ENCODE measurements at regions of chr6 and their contacts with region 1.

Region 1: DNA sequence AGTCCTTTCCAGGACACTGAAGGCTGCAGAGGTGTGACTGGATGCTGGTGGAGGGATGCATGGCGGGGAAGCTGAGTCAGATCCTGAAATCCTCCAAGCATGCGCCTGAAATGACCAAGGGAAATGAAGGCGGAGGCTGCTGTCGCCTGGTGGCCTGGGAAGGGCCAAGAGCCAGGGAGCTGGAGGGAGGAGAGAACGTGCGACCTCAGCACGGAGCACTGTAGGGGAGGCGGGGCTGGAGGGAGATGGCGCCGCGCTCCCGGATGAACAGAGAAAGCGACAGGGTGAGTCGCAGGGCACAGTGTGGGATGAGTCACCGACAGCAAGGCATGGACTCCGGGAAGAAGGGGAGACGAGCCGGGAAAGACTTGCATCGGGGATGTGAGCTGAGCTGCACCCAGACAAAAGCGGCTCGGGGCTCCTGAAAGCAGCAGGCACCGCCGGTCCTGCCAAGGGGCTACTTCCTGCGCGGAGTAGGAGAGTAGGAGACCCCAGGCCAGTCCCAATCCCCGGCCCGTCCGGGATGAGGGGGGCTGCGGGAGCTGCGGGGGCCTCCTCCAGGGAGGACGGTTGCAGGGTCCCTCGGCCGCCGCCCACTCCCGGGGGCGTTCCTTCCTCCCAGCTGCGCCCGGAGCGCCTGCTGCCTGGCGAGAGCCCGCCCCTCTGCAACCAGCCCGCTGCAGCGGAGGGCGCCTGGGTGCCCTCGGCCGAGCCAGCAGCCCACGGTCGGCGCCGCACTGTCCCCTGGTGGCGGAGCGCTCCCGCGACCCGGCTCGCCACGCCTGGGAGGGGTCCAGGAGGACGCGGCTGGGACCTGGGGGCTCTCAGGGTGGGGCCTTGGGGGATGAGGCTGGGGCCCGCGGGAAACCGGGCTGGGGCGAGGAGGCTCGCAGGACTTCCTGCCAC is 11.0 kb upstream of the NQO2 start:
- DNase-seq: peak; percentile 62
- H3K4me3 ChIP-seq: peak overlapping the region; percentile 71
- CTCF ChIP-seq: peak; percentile 84

Region 2: GRCh38 chr6:2738373-2738979 is 250.2 kb before region 1 on chr6:
- CTCF ChIA-PET with region 1: interaction called, 14 read pairs
- POLR2A ChIA-PET with region 1: no interaction called
- DNase-seq: no peak
- H3K4me3 ChIP-seq: no peak overlapping the region
- CTCF ChIP-seq: peak; percentile 62

Region 3: GRCh38 chr6:2841264-2842138 is 147.2 kb before region 1 on chr6 and contains the start of gene SERPINB1:
- CTCF ChIA-PET with region 1: interaction called, 100 read pairs
- POLR2A ChIA-PET with region 1: interaction called, 14 read pairs
- DNase-seq: peak; percentile 72
- H3K4me3 ChIP-seq: peak within 1 kb of the TSS; percentile 55
- CTCF ChIP-seq: no peak

Region 4: DNA sequence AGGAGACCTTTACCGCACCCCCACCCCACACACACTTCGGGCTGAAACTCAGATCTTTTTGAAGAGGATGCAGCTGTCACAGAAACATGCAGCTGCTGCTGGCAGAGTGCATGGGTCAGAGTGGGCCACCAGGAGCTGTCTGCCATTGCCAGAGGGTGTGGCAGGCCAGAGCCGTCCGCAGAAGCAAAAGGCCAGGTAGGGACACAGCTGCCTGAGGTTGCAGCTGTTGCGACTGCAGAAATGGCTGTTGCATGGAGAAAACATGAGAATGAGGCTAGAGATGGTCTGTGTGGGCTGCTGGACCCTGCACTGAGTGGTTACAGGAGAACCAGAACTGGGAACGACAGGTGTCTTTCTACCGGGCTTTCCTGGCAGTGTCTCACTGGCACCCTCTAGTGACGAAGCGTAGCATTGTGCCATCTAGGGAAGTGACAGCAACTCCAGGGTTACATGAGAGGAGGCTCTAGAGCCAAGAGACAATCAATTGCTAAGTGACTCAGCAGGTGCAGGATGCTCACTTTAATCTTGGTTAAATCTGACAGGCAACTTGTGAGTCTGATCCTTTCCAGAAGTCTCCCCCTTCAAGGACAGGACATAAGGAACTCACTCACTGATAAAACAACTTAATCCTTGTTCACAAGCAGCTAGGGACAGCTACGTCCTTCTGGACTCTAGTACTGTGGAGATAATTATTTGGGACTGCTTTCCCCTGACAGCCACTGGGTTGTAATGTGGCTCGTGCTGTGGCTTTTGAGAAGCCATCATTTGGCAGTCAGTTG is 56.5 kb before region 1 on chr6:
- CTCF ChIA-PET with region 1: interaction called, 25 read pairs
- POLR2A ChIA-PET with region 1: no interaction called
- DNase-seq: peak; percentile 1
- H3K4me3 ChIP-seq: no peak overlapping the region
- CTCF ChIP-seq: peak; percentile 95

Region 5: GRCh38 chr6:2971420-2972218 is 17.1 kb before region 1 on chr6 and contains the start of gene SERPINB6:
- CTCF ChIA-PET with region 1: interaction called, 54 read pairs
- POLR2A ChIA-PET with region 1: interaction called, 14 read pairs
- DNase-seq: no peak
- H3K4me3 ChIP-seq: peak within 1 kb of the TSS; percentile 65
- CTCF ChIP-seq: no peak

Region 6: GRCh38 chr6:2999618-3000557 is 11.2 kb after region 1 on chr6 and contains the start of gene NQO2:
- CTCF ChIA-PET with region 1: interaction called, 31 read pairs
- POLR2A ChIA-PET with region 1: interaction called, 8 read pairs
- DNase-seq: no peak
- H3K4me3 ChIP-seq: peak within 1 kb of the TSS; percentile 85
- CTCF ChIP-seq: no peak

Region 7: GRCh38 chr6:3068329-3069214 is 79.9 kb after region 1 on chr6 and contains the start of gene RIPK1:
- CTCF ChIA-PET with region 1: interaction called, 7 read pairs
- POLR2A ChIA-PET with region 1: interaction called, 22 read pairs
- DNase-seq: no peak
- H3K4me3 ChIP-seq: peak within 1 kb of the TSS; percentile 77
- CTCF ChIP-seq: peak; percentile 55